Heart left ventricle (tissue), 16 donors: ENCODE measurements at regions of chr3 and their contacts with region 1.

Region 1: GRCh38 chr3:115388166-115388565 is 235.1 kb upstream of the GAP43 start:
- DNase-seq: peak in 2 of 5 donors; percentile 20 to 40
- ATAC-seq: peak; percentile 91 to 94 (median 92)
- H3K4me3 ChIP-seq: no peak overlapping the region
- H3K27ac ChIP-seq: peak overlapping the region in 11 of 12 donors; percentile 4 to 73 (median 57)
- H3K4me1 ChIP-seq: peaks cover 0 to 17% (median 12%) of the 10 kb centered on the region in 12 donors
- H3K27me3 ChIP-seq: no peaks in the 10 kb centered on the region
- CTCF ChIP-seq: no peak
- POLR2A ChIP-seq: no peak

Region 2: DNA sequence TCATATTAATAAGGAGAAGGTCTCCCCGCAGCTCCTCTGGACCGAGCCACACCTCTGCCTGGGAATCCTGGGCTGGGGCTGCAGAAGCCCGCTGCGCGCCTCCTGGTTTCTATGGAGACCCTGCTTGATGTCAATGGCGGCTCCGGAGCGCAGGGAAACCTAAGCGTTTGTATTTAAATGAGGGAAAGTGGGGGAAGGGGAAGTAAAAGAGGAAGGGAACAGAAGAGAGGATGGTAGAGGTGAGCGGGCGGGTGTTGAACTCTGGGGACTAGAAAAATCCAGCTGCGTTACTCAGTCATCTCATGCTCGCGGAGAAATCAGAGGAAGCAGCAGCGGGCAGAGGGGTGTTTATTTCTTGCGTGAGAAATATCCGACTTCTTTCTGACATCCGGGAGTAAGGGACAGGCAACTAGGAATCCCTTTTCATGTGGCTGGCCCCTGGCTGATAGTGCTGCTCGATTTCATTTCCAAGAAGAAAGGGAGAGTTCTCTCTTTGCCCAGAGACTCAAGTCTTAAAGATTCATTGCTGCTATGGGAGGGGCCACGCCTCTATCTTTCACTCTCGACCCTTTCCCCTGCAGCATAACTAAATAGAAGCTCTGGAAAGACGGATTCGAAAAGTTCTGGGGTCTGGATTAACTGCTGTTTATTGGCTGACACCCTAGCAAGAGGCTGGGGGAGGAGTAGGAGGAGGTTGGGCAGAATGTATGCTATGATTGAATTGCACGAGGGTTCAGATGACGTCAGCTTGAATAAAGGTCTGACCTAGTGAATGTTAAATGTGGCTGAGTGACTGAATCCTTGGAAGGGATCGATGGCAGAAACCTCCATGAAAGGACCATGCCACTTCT is 124.6 kb after region 1 on chr3:
- intact Hi-C with region 1: loop called in 5 of 10 experiments (anchors 5 to 10 kb)
- DNase-seq: peak in 4 of 5 donors; percentile 14 to 61 (median 34)
- ATAC-seq: peak; percentile 27 to 70 (median 66)
- H3K4me3 ChIP-seq: peak overlapping the region; percentile 18 to 67 (median 52)
- H3K27ac ChIP-seq: peak overlapping the region in 9 of 12 donors; percentile 13 to 65 (median 41)
- H3K4me1 ChIP-seq: peaks cover 0 to 22% (median 10%) of the 10 kb centered on the region in 12 donors
- H3K27me3 ChIP-seq: peaks cover 0 to 3% (median 0%) of the 10 kb centered on the region in 9 donors
- CTCF ChIP-seq: no peak
- POLR2A ChIP-seq: no peak